ENCODE measurements at regions of chr12 and their contacts with region 1.

Region 1: DNA sequence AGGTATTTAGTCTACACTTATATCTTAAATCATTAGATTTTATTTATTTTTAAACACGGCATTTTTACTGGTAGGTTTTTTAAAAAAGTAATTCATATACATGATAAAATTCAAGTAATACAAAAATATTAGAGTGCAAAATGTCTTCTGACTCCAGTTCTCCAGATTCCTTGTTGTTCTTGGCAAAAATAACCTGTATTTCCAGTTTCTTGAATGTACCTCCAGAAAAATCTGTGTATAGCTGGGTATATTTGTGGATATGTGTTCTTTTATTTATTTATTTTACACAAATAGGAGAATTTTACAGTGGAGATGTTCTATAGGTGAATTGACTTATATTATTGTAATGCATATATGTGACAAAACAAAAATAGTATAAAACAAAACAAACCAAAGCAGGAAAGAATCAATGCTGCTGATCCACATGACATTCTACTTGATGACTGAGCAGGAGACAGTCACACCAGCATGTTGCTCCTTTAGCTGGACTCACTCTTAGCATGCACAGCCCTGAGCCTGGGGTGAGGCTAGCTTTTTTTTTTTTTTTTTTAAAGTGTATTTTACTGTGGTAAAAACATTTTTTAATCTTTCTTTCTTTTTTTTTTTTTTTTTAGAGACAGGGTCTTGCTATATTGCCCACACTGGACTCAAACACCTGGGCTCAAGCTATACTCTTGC is 42.2 kb upstream of the SLC38A2 start:
- DNase-seq: peak; percentile 49
- H3K4me3 ChIP-seq: no peak overlapping the region
- H3K27ac ChIP-seq: no peak overlapping the region
- H3K4me1 ChIP-seq: peaks cover 7% of the 10 kb centered on the region
- H3K27me3 ChIP-seq: no peaks in the 10 kb centered on the region
- CTCF ChIP-seq: no peak

Region 2: DNA sequence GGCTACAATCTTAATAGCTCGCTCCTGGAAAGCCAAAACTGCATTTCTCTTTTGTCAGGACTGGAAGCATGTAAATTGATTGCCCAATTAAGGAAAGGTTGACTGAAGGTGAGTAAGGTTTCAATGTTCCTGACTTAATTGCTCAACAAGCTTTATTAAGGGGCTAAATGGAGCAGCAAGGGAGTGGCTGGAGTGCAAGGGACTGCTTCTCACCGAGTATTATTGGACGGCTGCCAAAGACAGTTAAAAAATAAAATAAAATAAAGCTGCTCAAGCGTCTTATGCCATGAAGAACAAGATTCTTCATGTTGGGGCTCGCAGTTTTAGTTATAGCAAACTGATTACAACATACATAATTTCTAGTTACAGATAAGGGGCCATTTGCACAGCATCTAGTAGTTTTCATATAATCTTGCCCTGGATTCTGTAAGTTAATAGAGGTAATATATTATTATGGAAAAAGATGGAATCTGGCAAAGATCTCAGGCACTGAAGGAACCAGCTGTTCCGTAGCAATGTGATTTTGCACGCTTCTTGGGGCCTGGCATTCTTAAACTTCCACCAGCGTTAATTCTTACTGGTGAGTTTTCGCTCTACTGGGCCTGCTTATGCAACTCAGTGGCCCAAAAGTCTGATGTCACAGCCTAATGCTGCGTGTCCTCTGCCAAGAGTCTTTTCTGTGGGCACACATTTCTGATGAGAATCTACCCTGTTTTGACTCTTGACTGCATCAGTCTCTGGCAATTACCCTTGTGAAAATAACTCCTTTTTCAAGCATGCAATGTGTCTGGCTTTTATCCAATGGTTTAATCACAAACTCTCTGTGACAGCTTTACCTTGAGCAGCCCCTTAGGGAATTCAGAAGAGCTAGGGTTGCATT is 254.4 kb before region 1 on chr12:
- CTCF ChIA-PET with region 1: no interaction called
- dilution Hi-C with region 1: loop called (anchors 10 kb)
- in situ Hi-C with region 1: no loop called
- intact Hi-C with region 1: no loop called
- DNase-seq: peak; percentile 90
- H3K4me3 ChIP-seq: no peak overlapping the region
- H3K27ac ChIP-seq: peak overlapping the region; percentile 31
- H3K4me1 ChIP-seq: peaks cover 30% of the 10 kb centered on the region
- H3K27me3 ChIP-seq: no peaks in the 10 kb centered on the region
- CTCF ChIP-seq: no peak

Region 3: GRCh38 chr12:46187023-46187422 is 227.7 kb before region 1 on chr12:
- CTCF ChIA-PET with region 1: no interaction called
- dilution Hi-C with region 1: no loop called
- in situ Hi-C with region 1: no loop called
- intact Hi-C with region 1: no loop called
- DNase-seq: peak; percentile 72
- H3K4me3 ChIP-seq: no peak overlapping the region
- H3K27ac ChIP-seq: no peak overlapping the region
- H3K4me1 ChIP-seq: peaks cover 10% of the 10 kb centered on the region
- H3K27me3 ChIP-seq: no peaks in the 10 kb centered on the region
- CTCF ChIP-seq: no peak